PC-9 (cell line): ENCODE measurements at regions of chr2 and their contacts with region 1.

Region 1: GRCh38 chr2:135709992-135710391 is 31.7 kb upstream of the UBXN4 start:
- DNase-seq: peak in 1 of 2 experiments; percentile 53
- H3K4me3 ChIP-seq: no peak overlapping the region
- H3K27ac ChIP-seq: no peak overlapping the region
- H3K4me1 ChIP-seq: no peaks in the 10 kb centered on the region
- H3K27me3 ChIP-seq: no peaks in the 10 kb centered on the region
- CTCF ChIP-seq: peak; percentile 96

Region 2: DNA sequence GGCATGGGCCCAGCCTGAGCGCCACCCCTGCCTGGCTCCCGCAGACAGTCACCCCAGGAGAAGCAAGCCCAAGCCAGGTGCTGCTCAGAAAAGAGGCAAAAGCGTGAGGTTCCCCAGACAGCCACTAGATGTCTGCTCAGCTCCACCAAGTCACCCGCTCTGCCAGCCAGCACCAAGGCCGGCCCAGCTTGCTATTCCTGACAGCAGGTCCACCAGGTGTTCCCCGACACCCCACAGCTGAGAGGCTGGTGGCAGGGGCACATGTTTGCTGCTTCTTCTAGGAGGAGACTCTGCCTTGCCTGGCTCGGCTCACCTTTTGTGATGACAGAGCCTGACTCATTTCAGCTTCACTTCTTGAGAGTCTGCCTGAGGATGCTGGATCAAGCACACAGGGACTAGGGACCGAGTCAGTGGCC is 1249.4 kb before region 1 on chr2:
- CTCF ChIA-PET with region 1: no interaction called
- POLR2A ChIA-PET with region 1: no interaction called
- intact Hi-C with region 1: loop called (anchors 10 kb)
- DNase-seq: peak; percentile 55 to 67
- H3K4me3 ChIP-seq: no peak overlapping the region
- H3K27ac ChIP-seq: no peak overlapping the region
- H3K4me1 ChIP-seq: no peaks in the 10 kb centered on the region
- H3K27me3 ChIP-seq: no peaks in the 10 kb centered on the region
- CTCF ChIP-seq: peak; percentile 81

Region 3: GRCh38 chr2:135473567-135473966 is 236.4 kb before region 1 on chr2:
- CTCF ChIA-PET with region 1: interaction called, 5 read pairs
- POLR2A ChIA-PET with region 1: no interaction called
- intact Hi-C with region 1: loop called (anchors 5 kb)
- DNase-seq: no peak
- H3K4me3 ChIP-seq: no peak overlapping the region
- H3K27ac ChIP-seq: no peak overlapping the region
- H3K4me1 ChIP-seq: no peaks in the 10 kb centered on the region
- H3K27me3 ChIP-seq: no peaks in the 10 kb centered on the region
- CTCF ChIP-seq: peak; percentile 59